ENCODE measurements at regions of chr10 and their contacts with region 1.

Region 1: DNA sequence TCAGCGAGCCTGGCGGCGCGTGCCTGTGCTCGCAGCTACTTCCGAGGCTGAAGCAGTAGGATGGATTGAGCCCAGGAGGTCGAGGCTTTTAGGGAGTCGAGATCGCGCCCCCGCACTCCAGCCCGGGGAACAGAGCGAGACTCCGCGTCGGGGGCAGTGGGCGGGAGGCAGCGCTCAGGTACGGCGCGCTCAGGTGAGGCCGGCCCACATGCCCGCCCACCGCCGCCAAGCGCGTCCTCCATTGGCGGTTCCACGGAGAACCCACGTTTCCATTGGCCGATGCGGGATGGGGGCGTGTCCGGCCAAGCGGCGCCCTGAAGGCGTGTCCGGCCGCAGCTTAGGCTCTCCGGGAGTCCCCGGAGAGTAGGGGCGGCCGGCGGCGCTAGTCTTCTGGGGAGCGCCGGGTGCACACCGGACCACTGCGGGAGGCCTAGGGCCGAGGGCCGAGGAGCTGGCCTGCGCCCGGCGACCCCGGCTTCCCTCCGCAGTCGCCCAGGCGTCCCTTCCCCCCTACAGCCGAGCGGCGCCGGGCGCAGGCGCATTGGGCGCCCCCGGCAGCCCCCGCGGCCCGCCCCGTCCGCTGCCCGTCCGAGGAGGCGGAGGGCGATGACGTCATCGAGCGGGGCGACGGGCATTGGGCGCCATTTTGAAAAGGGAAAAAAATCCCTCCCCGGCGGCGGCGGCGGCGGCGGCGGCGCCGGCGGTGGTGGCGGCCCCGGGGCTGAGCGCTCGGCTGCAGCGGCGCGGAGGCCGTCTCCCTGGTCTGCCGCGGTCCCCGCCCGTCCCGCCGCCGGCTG is at the start of gene PPP2R2D:
- DNase-seq: peak; percentile 96
- ATAC-seq: peak; percentile 96
- total RNA-seq, gene PPP2R2D: 33.9 TPM

Region 2: DNA sequence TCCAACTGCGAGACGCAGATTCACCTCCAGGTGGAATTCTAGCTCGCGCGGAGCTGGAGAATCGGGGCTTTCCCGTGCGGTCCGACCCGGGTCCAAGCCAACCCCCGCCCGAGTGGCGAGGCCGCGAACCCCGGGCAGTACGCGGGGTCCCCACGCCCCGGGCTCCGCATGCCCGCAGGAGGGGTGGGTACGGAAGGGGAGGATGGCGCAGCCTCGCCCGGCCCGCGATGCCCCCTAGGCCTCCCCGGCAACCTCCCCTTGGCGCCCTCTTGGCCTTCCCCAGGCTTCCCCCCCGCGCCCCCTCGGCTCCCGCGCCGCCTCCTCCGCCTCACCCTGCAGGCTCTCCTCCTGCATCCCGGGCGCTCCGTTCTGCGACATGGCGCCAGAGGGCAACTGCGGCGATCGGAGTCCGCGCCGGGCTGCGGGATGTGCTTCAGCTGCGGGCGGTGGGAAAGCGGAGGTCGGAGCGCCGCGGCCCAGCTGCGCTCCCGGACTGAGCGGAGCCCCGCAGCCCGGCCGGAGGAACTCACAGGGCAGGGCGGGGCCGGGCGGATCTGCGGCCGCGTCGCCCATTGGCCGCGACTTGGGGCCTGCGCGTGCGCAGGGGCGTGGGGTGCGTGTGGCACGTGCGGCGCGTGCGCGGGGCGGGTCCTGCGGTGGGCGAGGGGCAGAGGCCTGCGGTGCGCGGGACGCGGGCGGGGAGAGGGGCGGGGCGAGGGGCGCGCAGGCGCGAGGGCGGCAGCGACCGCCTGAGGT is 81.1 kb after region 1 on chr10 and contains the start of gene BNIP3:
- intact Hi-C with region 1: loop called (anchors 5 kb)
- DNase-seq: peak; percentile 98
- ATAC-seq: peak; percentile 95
- total RNA-seq, gene BNIP3: 158 TPM

Measured in Right ventricle myocardium superior (tissue), 1 donor.